MCF 10A (cell line): ENCODE measurements at regions of chr6 and their contacts with region 1.

Region 1: GRCh38 chr6:6057424-6058053 is 50.8 kb upstream of the NRN1 start:
- DNase-seq: peak; percentile 66
- H3K4me3 Mint-ChIP-seq: no peak overlapping the region
- H3K27ac Mint-ChIP-seq: no peak overlapping the region
- H3K4me1 Mint-ChIP-seq: no peaks in the 10 kb centered on the region
- H3K27me3 Mint-ChIP-seq: peaks cover 28% of the 10 kb centered on the region
- CTCF ChIP-seq: peak; percentile 57

Region 2: DNA sequence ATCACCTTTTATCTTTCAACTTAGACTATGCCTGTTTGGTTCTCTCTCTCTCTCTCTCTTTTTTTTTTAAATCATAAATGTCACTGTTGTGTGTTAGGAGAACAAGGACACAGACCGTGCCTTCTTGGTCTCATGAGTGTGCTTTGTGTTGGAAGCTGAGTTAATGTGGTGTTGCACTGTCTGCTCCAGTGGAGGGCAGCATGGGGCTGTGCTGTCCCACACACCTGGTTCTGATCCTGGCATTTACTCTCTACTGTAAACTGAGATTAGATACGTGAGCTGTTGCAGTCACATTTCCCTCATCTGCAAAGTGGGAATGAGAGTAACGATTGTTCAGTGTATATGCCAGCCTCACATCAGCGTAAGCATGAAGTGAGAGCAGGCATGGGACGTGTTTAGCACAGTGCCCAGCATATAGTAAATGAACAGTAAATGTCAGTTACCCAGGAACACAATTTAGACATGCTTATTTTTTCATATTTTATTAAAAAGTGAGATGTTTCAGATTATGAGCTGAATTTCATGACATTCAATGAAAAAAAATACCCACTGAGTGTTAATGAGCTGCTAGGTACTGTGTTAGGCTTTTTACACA is 635.1 kb before region 1 on chr6:
- CTCF ChIA-PET with region 1: interaction called, 4 read pairs
- POLR2A ChIA-PET with region 1: no interaction called
- intact Hi-C with region 1: loop called (anchors 2 kb)
- DNase-seq: peak; percentile 53
- H3K4me3 Mint-ChIP-seq: no peak overlapping the region
- H3K27ac Mint-ChIP-seq: no peak overlapping the region
- H3K4me1 Mint-ChIP-seq: peaks cover 9% of the 10 kb centered on the region
- H3K27me3 Mint-ChIP-seq: no peaks in the 10 kb centered on the region
- CTCF ChIP-seq: peak; percentile 38

Region 3: DNA sequence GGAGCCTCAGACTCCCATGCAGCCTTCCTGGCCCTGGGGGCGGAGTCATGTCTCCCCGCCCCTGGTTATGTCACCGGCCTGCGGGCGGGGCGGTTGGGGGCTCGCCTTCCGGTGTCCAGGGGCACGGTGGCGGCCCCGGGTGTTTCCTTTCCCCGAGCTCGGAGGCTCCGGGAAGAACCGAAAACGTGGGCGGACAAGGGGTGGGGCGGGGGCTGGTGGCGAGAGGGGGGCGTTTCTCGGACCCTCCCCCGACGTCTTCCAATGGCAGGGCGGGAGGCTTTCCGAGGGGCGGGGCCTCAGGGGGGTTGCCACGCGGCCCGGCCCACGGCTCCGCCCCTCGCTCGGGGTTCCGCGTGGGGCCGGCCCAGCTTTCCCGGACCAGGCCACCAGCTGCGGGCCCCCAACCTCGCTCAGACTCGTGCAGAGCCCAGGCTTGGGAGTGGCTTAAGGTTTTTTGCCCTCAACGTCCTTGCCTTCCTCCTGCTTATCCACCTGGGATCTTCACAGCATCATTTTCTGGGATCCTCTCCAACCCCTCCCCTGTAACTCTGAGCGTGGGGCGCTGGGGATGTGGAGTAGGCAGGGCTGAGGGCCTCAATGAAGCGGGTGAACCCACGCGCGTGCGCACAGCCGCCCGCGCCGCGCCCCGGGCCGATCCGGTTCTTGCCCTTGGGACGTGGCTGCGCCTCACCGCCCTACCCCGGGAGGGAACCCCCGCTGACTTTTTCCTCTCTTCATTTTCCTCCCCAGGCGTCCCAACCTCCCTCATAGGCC is 48.7 kb before region 1 on chr6:
- CTCF ChIA-PET with region 1: no interaction called
- POLR2A ChIA-PET with region 1: no interaction called
- intact Hi-C with region 1: no loop called
- DNase-seq: peak; percentile 26
- H3K4me3 Mint-ChIP-seq: peak overlapping the region; percentile 57
- H3K27ac Mint-ChIP-seq: no peak overlapping the region
- H3K4me1 Mint-ChIP-seq: no peaks in the 10 kb centered on the region
- H3K27me3 Mint-ChIP-seq: peaks cover 90% of the 10 kb centered on the region
- CTCF ChIP-seq: no peak

Region 4: GRCh38 chr6:6315660-6316059 is 258.1 kb after region 1 on chr6:
- CTCF ChIA-PET with region 1: interaction called, 4 read pairs
- POLR2A ChIA-PET with region 1: no interaction called
- intact Hi-C with region 1: loop called (anchors 2 kb)
- DNase-seq: peak; percentile 56
- H3K4me3 Mint-ChIP-seq: no peak overlapping the region
- H3K27ac Mint-ChIP-seq: no peak overlapping the region
- H3K4me1 Mint-ChIP-seq: no peaks in the 10 kb centered on the region
- H3K27me3 Mint-ChIP-seq: peaks cover 21% of the 10 kb centered on the region
- CTCF ChIP-seq: peak; percentile 85

Region 5: GRCh38 chr6:6362056-6362840 is 304.7 kb after region 1 on chr6:
- CTCF ChIA-PET with region 1: no interaction called
- POLR2A ChIA-PET with region 1: no interaction called
- intact Hi-C with region 1: no loop called
- DNase-seq: no peak
- H3K4me3 Mint-ChIP-seq: no peak overlapping the region
- H3K27ac Mint-ChIP-seq: no peak overlapping the region
- H3K4me1 Mint-ChIP-seq: no peaks in the 10 kb centered on the region
- H3K27me3 Mint-ChIP-seq: no peaks in the 10 kb centered on the region
- CTCF ChIP-seq: no peak

Region 6: DNA sequence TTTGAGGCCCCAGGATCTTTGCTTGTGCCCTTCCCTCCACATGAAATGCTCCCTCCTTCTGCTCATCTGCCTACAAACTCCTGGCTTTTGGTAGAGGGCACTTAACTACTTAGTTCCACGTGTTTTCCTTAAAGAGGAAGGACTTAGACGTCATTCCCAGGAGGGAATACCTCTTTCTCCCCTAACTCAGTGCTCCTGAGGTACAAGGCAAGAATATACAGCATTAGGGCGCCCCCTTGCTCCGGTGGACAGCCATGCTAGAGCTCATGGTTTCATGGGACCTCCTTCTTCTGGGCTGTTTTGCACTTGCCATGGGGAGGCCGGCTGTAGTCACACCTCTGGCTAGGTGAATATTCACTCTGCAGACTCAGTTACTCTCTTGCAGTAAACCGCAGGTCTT is 437.1 kb after region 1 on chr6:
- CTCF ChIA-PET with region 1: no interaction called
- POLR2A ChIA-PET with region 1: no interaction called
- intact Hi-C with region 1: loop called (anchors 1 kb)
- DNase-seq: peak; percentile 82
- H3K4me3 Mint-ChIP-seq: no peak overlapping the region
- H3K27ac Mint-ChIP-seq: no peak overlapping the region
- H3K4me1 Mint-ChIP-seq: peaks cover 14% of the 10 kb centered on the region
- H3K27me3 Mint-ChIP-seq: no peaks in the 10 kb centered on the region
- CTCF ChIP-seq: peak; percentile 69